Dendritic cell treated with granulocyte-macrophage colony-stimulating factor and Interleukin-4, amounts not matched to agents 40 ng/mL and 50 ng/mL, for 4 days (primary cell): ENCODE measurements at regions of chrX and their contacts with region 1.

Region 1: DNA sequence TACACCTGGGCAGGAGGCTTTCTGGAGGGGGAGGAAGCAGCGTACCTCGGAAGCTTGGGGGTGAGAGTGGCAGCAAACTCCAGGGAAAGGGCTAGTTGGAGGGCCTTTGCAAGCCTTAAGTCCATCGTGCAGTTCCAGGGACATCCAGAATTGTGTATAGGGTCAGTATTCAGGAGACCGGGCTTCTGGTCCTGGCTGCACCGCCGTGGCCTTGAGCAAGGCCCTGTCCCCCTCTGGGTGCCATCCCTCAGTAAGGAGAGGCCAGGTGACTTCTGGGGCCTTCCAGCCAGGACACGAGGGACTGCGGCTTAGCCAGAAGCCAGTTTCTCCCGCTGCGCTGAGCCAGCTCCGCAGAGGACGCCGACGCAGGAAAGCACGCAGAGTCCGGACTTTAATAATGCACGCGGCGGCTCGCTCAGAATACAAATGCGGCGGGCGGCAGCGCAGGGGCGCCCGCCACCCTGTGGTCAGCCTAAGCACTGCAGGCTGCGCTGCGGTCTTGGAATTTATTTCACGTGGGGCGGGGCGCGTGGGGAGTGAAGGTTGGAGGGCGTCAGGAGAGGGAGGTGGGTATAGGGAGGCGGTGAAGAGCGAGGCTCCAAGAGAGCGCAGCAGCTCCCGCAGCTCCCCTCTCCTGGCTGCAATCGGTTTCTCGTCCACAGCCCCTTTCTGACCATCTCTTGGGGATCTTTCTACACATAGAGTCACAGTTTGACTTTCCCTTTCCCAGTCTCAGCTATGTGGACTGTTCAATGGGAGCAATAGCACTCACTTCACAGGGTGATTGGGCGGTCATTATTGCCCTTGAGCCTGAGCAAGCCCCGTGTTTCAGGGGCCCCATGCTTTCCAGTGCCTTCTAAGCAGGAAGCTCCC is 94.1 kb upstream of the GPR50 start:
- H3K4me3 Mint-ChIP-seq: peak overlapping the region; percentile 39
- H3K27ac Mint-ChIP-seq: no peak overlapping the region
- H3K4me1 Mint-ChIP-seq: peaks cover 5% of the 10 kb centered on the region
- H3K27me3 Mint-ChIP-seq: peaks cover 23% of the 10 kb centered on the region

Region 2: DNA sequence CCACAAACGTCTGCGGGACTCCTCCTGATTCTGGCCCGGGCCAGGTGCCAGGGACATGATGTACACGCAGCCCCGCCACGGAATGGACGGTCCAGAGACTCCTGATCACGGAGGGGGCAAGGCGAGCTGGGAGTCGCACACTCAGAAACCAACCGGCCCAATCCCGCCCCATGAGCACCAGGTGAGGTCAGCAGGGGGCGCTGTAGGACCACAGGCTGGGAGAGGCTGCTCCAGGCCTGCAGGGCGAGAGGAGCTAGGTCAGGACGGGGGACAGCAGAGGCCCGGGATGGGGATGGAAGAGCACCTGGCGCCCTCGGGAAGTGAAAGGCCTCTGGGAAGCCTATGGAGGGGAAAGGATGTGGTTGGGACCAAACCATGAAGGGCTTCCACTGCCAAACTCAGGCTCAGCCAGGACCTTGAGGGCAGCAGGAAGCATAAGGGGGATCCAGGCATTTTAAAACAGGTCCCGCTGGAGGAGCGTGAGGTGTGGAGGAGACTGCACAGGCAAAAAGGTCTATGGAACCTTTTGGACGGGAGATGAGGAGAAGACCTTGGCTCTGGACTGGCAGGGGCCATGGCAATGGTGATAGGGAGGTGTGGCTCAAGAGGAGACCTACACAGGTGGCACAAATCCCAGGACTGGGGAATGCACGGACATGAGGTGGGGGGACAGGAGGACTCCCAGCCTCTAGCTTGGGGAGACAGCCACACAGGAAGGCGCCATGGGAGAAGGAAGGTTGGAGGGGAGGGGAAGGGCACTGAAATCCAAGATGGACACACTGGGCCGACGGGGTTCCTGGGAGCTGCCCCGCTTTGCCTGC is 310.0 kb before region 1 on chrX:
- intact Hi-C with region 1: loop called (anchors 1 kb)
- H3K4me3 Mint-ChIP-seq: no peak overlapping the region
- H3K27ac Mint-ChIP-seq: no peak overlapping the region
- H3K4me1 Mint-ChIP-seq: peaks cover 18% of the 10 kb centered on the region
- H3K27me3 Mint-ChIP-seq: no peaks in the 10 kb centered on the region